ENCODE measurements at regions of chr4 and their contacts with region 1.

Region 1: DNA sequence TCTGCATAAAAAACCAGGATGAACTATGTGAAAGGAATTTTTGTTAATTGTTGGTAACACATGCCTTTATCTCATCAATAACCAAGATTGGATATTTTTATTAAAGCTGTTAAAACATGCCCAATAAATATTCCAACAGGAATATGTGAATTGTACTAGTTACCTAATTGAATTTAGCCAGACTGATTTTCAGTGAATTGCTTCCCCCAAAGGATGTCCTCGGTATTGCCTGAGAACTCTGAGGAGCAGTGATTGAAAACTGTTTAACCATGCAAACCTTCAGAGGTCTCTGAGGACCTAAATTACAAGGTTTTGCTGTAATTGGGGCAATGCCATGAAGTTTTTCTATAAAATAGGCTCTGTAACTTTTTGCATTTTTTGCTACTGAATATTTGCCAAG is 66.6 kb downstream of the BLTP1 start:
- DNase-seq: peak in 1 of 2 donors; percentile 38
- ATAC-seq: no peak
- H3K4me3 ChIP-seq: no peak overlapping the region
- H3K4me3 Mint-ChIP-seq: no peak overlapping the region
- H3K27ac ChIP-seq: no peak overlapping the region
- H3K27ac Mint-ChIP-seq: no peak overlapping the region
- H3K4me1 ChIP-seq: no peaks in the 10 kb centered on the region
- H3K4me1 Mint-ChIP-seq: peaks cover 17 to 26% of the 10 kb centered on the region in 2 donors
- H3K27me3 ChIP-seq: no peaks in the 10 kb centered on the region
- H3K27me3 Mint-ChIP-seq: no peaks in the 10 kb centered on the region
- CTCF ChIP-seq: peak; percentile 29

Region 2: GRCh38 chr4:121943941-121944340 is 274.8 kb before region 1 on chr4:
- intact Hi-C with region 1: loop called (anchors 10 kb)
- DNase-seq: peak in 1 of 2 donors; percentile 36
- ATAC-seq: peak in 2 of 3 donors; percentile 50 to 57
- H3K4me3 ChIP-seq: no peak overlapping the region
- H3K4me3 Mint-ChIP-seq: no peak overlapping the region
- H3K27ac ChIP-seq: no peak overlapping the region
- H3K27ac Mint-ChIP-seq: no peak overlapping the region
- H3K4me1 ChIP-seq: peaks cover 7% of the 10 kb centered on the region
- H3K4me1 Mint-ChIP-seq: peaks cover 4 to 8% of the 10 kb centered on the region in 2 donors
- H3K27me3 ChIP-seq: peaks cover 5% of the 10 kb centered on the region
- H3K27me3 Mint-ChIP-seq: peaks cover 48 to 68% of the 10 kb centered on the region in 2 donors
- CTCF ChIP-seq: peak; percentile 17

Region 3: GRCh38 chr4:124191329-124191728 is 1972.6 kb after region 1 on chr4:
- intact Hi-C with region 1: no loop called
- DNase-seq: no peak
- ATAC-seq: no peak
- H3K4me3 ChIP-seq: no peak overlapping the region
- H3K4me3 Mint-ChIP-seq: no peak overlapping the region
- H3K27ac ChIP-seq: no peak overlapping the region
- H3K27ac Mint-ChIP-seq: no peak overlapping the region
- H3K4me1 ChIP-seq: no peaks in the 10 kb centered on the region
- H3K4me1 Mint-ChIP-seq: no peaks in the 10 kb centered on the region
- H3K27me3 ChIP-seq: no peaks in the 10 kb centered on the region
- H3K27me3 Mint-ChIP-seq: no peaks in the 10 kb centered on the region
- CTCF ChIP-seq: no peak

Measured in natural killer cell (primary cell).